H1 (cell line): ENCODE measurements at regions of chr5 and their contacts with region 1.

Region 1: GRCh38 chr5:150672237-150672883 is 11.3 kb downstream of the MYOZ3 start:
- DNase-seq: peak; percentile 58 to 84
- H3K4me3 ChIP-seq: peak overlapping the region; percentile 88 to 96 (median 93)
- H3K27ac ChIP-seq: peak overlapping the region; percentile 90
- H3K4me1 ChIP-seq: peaks cover 5 to 23% (median 14%) of the 10 kb centered on the region in 4 experiments
- H3K27me3 ChIP-seq: no peaks in the 10 kb centered on the region
- CTCF ChIP-seq: no peak
- EP300 ChIP-seq: no peak
- POLR2A ChIP-seq: peak in 1 of 2 experiments; percentile 52; a peak in 2 of 3 replicates
- RAD21 ChIP-seq: no peak

Region 2: DNA sequence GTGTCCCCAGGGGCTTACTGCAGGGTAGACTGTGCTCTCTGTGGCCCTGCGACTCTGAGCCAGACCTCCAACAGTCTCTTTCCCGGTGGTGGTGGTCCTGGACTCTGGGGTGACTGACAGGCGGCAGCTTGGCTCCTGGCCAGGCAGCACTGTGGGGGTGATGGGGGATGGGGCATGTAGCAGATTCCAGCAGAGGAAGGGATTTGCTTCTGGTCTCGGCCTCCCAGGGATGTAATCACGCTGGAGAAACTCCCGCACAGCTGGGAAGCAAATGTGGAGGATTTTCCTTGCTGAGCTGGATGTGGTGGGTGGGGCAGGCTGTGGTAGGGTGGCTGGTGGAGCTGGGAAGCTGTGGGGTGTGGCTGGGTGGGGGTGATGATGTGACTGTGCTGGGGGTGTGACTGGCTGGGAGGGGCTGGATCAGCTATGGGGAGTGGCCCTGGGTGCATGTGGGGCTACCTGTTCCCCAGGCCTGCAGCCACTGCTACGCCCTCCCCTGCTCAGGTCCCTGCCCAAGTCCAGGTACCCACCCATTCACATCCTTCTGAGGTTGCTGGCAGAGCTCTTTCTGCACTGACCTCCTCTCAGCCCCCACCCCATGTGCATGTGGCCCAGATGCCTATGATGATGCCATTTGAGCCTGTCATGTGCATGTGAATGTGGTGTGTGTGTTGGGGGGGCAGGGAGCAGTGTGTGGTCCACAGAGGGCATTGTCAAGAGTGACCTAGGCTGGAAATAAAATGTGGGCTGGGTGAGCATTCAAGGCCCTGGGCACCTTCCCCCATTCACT is 160.6 kb before region 1 on chr5:
- CTCF ChIA-PET with region 1: no interaction called
- POLR2A ChIA-PET with region 1: no interaction called
- DNase-seq: no peak
- H3K4me3 ChIP-seq: peak overlapping the region in 1 of 4 experiments; percentile 4; a peak in 1 of 8 replicates
- H3K27ac ChIP-seq: 0 out of 2 replicates have a peak overlapping the region, but pooled peaks have one; percentile 26
- H3K4me1 ChIP-seq: peaks cover 21 to 41% (median 30%) of the 10 kb centered on the region in 4 experiments
- H3K27me3 ChIP-seq: no peaks in the 10 kb centered on the region
- CTCF ChIP-seq: no peak
- EP300 ChIP-seq: no peak; a peak in 1 of 3 replicates
- POLR2A ChIP-seq: no peak
- RAD21 ChIP-seq: 0 out of 4 replicates have a peak, but pooled peaks of 1 of the 2 experiments have one; percentile 3

Region 3: GRCh38 chr5:150689120-150689519 is 16.8 kb after region 1 on chr5:
- CTCF ChIA-PET with region 1: interaction called, 4 read pairs
- POLR2A ChIA-PET with region 1: interaction called, 17 read pairs
- DNase-seq: no peak
- H3K4me3 ChIP-seq: no peak overlapping the region
- H3K27ac ChIP-seq: no peak overlapping the region
- H3K4me1 ChIP-seq: no peaks in the 10 kb centered on the region
- H3K27me3 ChIP-seq: no peaks in the 10 kb centered on the region
- CTCF ChIP-seq: no peak
- EP300 ChIP-seq: no peak
- POLR2A ChIP-seq: no peak
- RAD21 ChIP-seq: no peak

Region 4: GRCh38 chr5:150694612-150695011 is 22.3 kb after region 1 on chr5:
- CTCF ChIA-PET with region 1: interaction called, 8 read pairs
- POLR2A ChIA-PET with region 1: interaction called, 26 read pairs
- DNase-seq: no peak
- H3K4me3 ChIP-seq: no peak overlapping the region
- H3K27ac ChIP-seq: no peak overlapping the region
- H3K4me1 ChIP-seq: peaks cover 0 to 2% (median 0%) of the 10 kb centered on the region in 4 experiments; a peak in 1 of 7 replicates
- H3K27me3 ChIP-seq: no peaks in the 10 kb centered on the region
- CTCF ChIP-seq: no peak
- EP300 ChIP-seq: no peak
- POLR2A ChIP-seq: no peak
- RAD21 ChIP-seq: no peak